Naive thymus-derived CD4-positive, alpha-beta T cell (primary cell): ENCODE measurements at regions of chr10 and their contacts with region 1.

Region 1: GRCh38 chr10:6498771-6499170 is 81.3 kb downstream of the PRKCQ start:
- DNase-seq: peak in 8 of 9 donors; percentile 48 to 75 (median 67)
- ATAC-seq: peak; percentile 85
- H3K4me3 ChIP-seq: no peak overlapping the region
- H3K4me3 Mint-ChIP-seq: peak overlapping the region; percentile 13 to 86 (median 59)
- H3K27ac ChIP-seq: peak overlapping the region; percentile 36
- H3K27ac Mint-ChIP-seq: peak overlapping the region; percentile 81 to 94 (median 90)
- H3K4me1 ChIP-seq: peaks cover 33 to 49% of the 10 kb centered on the region in 2 donors
- H3K4me1 Mint-ChIP-seq: peaks cover 24 to 47% (median 43%) of the 10 kb centered on the region in 7 donors
- H3K27me3 ChIP-seq: no peaks in the 10 kb centered on the region
- H3K27me3 Mint-ChIP-seq: no peaks in the 10 kb centered on the region

Region 2: DNA sequence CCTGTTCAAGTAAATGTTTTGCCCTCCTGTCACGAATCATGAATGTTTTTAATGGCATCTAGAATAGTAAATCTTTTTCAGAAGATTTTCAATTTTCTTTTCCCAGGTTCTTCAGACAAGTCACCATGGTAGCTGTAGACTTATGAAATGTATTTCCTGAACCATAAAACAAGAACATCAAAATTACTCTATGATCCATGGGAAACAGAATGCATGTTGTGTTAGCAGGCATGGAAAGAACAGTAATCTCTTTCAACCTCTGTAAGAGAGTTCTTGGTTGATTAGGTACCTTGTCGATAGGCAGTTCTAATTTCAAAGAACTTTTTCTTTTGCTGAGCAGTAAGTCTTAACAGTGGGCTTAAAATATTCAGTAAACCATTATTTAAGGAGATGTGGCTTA is 1518.0 kb before region 1 on chr10:
- CTCF ChIA-PET with region 1: no interaction called
- POLR2A ChIA-PET with region 1: no interaction called
- intact Hi-C with region 1: no loop called
- DNase-seq: no peak
- ATAC-seq: no peak
- H3K4me3 ChIP-seq: no peak overlapping the region
- H3K4me3 Mint-ChIP-seq: no peak overlapping the region
- H3K27ac ChIP-seq: no peak overlapping the region
- H3K27ac Mint-ChIP-seq: no peak overlapping the region
- H3K4me1 ChIP-seq: no peaks in the 10 kb centered on the region
- H3K4me1 Mint-ChIP-seq: peaks cover 0 to 9% (median 0%) of the 10 kb centered on the region in 7 donors
- H3K27me3 ChIP-seq: no peaks in the 10 kb centered on the region
- H3K27me3 Mint-ChIP-seq: peaks cover 0 to 4% (median 0%) of the 10 kb centered on the region in 5 donors

Region 3: GRCh38 chr10:6482737-6483357 is 15.9 kb before region 1 on chr10:
- CTCF ChIA-PET with region 1: interaction called, 3 read pairs
- POLR2A ChIA-PET with region 1: interaction called, 5 read pairs
- intact Hi-C with region 1: loop called in 1 of 2 experiments (anchors 1 kb)
- DNase-seq: no peak
- ATAC-seq: peak; percentile 60
- H3K4me3 ChIP-seq: no peak overlapping the region
- H3K4me3 Mint-ChIP-seq: peak overlapping the region; percentile 7 to 76 (median 51)
- H3K27ac ChIP-seq: peak overlapping the region; percentile 32
- H3K27ac Mint-ChIP-seq: peak overlapping the region; percentile 15 to 92 (median 78)
- H3K4me1 ChIP-seq: peaks cover 15 to 25% of the 10 kb centered on the region in 2 donors
- H3K4me1 Mint-ChIP-seq: peaks cover 25 to 64% (median 42%) of the 10 kb centered on the region in 7 donors
- H3K27me3 ChIP-seq: no peaks in the 10 kb centered on the region
- H3K27me3 Mint-ChIP-seq: no peaks in the 10 kb centered on the region